ENCODE measurements at regions of chr1 and their contacts with region 1.

Region 1: GRCh38 chr1:35192853-35193664 is at the start of gene SFPQ:
- DNase-seq: peak; percentile 97 to 98 (median 97)
- H3K4me3 ChIP-seq: peak within 1 kb of the TSS; percentile 97 to 100 (median 100)
- H3K4me3 Mint-ChIP-seq: peak within 1 kb of the TSS; percentile 95 to 98
- H3K27ac ChIP-seq: peak within 1 kb of the TSS; percentile 89 to 96
- H3K27ac Mint-ChIP-seq: peak within 1 kb of the TSS; percentile 93 to 100 (median 98)
- H3K4me1 ChIP-seq: peaks cover 34 to 45% of the 10 kb centered on the region in 2 donors
- H3K4me1 Mint-ChIP-seq: peaks cover 46% of the 10 kb centered on the region
- H3K27me3 ChIP-seq: no peaks in the 10 kb centered on the region
- H3K27me3 Mint-ChIP-seq: peaks cover 2 to 4% (median 4%) of the 10 kb centered on the region in 3 donors
- CTCF ChIP-seq: no peak
- polyA plus RNA-seq, gene SFPQ: 80.8 to 220 (median 89.2) TPM

Region 2: GRCh38 chr1:34816778-34817177 is 376.3 kb before region 1 on chr1:
- intact Hi-C with region 1: no loop called
- DNase-seq: no peak
- H3K4me3 ChIP-seq: no peak overlapping the region
- H3K4me3 Mint-ChIP-seq: no peak overlapping the region
- H3K27ac ChIP-seq: no peak overlapping the region
- H3K27ac Mint-ChIP-seq: no peak overlapping the region
- H3K4me1 ChIP-seq: no peaks in the 10 kb centered on the region
- H3K4me1 Mint-ChIP-seq: peaks cover 4% of the 10 kb centered on the region
- H3K27me3 ChIP-seq: no peaks in the 10 kb centered on the region
- H3K27me3 Mint-ChIP-seq: peaks cover 1 to 4% (median 3%) of the 10 kb centered on the region in 3 donors
- CTCF ChIP-seq: no peak

Region 3: DNA sequence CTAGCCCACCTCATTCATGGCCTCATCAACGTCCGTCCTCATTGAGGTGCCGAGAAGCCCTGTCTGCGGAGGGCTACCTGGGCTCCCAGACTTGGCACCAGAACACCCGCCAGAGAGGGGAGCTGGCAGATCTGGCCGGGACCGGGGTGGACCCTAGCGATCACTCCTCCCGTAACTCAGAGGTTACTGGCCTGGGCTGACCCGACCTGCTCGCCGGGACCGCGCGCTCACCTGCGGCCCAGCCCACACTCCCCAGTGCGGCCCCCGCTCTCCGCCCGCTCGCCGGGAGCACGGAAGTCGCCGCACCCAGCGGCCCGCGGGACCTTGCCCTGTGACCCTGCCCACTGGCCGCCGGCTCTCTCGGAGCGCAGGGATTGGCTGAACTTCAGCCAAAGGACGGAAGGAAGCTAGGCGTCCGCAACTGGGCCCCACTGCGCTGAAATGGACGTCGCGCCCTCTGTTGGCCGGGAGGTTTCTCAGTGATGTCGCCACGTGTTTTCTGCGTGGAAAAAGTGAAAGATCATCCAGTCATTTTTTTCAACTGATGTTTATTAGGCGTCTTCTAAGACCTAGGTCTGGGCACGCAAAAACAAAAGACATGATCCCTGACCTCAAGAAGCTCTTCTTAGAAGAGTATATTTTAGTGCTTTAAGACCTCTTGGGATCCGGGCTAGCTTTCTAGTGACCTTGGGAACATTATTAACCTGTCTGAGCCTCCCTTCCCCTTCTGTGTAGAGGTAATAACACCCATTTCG is 333.4 kb before region 1 on chr1 and contains the start of gene SMIM12:
- intact Hi-C with region 1: loop called in 1 of 2 experiments (anchors 10 kb)
- DNase-seq: peak; percentile 91 to 93 (median 92)
- H3K4me3 ChIP-seq: peak within 1 kb of the TSS; percentile 92 to 94 (median 93)
- H3K4me3 Mint-ChIP-seq: peak within 1 kb of the TSS; percentile 92 to 99
- H3K27ac ChIP-seq: peak within 1 kb of the TSS; percentile 74 to 90
- H3K27ac Mint-ChIP-seq: peak within 1 kb of the TSS; percentile 87 to 96 (median 93)
- H3K4me1 ChIP-seq: peaks cover 19 to 24% of the 10 kb centered on the region in 2 donors
- H3K4me1 Mint-ChIP-seq: peaks cover 29% of the 10 kb centered on the region
- H3K27me3 ChIP-seq: no peaks in the 10 kb centered on the region
- H3K27me3 Mint-ChIP-seq: peaks cover 3 to 5% (median 5%) of the 10 kb centered on the region in 3 donors
- CTCF ChIP-seq: peak; percentile 88
- polyA plus RNA-seq, gene SMIM12: 31.8 to 121 (median 93.7) TPM

Region 4: GRCh38 chr1:35030756-35031446 is 162.2 kb before region 1 on chr1:
- intact Hi-C with region 1: loop called in 1 of 2 experiments (anchors 5 kb)
- DNase-seq: peak; percentile 21 to 42 (median 27)
- H3K4me3 ChIP-seq: peak overlapping the region; percentile 90 to 100 (median 96)
- H3K4me3 Mint-ChIP-seq: peak overlapping the region; percentile 95 to 97
- H3K27ac ChIP-seq: peak overlapping the region; percentile 89 to 92
- H3K27ac Mint-ChIP-seq: peak overlapping the region; percentile 94 to 99 (median 99)
- H3K4me1 ChIP-seq: peaks cover 14 to 28% of the 10 kb centered on the region in 2 donors
- H3K4me1 Mint-ChIP-seq: peaks cover 28% of the 10 kb centered on the region
- H3K27me3 ChIP-seq: no peaks in the 10 kb centered on the region
- H3K27me3 Mint-ChIP-seq: peaks cover 0 to 2% (median 2%) of the 10 kb centered on the region in 3 donors
- CTCF ChIP-seq: no peak

Region 5: DNA sequence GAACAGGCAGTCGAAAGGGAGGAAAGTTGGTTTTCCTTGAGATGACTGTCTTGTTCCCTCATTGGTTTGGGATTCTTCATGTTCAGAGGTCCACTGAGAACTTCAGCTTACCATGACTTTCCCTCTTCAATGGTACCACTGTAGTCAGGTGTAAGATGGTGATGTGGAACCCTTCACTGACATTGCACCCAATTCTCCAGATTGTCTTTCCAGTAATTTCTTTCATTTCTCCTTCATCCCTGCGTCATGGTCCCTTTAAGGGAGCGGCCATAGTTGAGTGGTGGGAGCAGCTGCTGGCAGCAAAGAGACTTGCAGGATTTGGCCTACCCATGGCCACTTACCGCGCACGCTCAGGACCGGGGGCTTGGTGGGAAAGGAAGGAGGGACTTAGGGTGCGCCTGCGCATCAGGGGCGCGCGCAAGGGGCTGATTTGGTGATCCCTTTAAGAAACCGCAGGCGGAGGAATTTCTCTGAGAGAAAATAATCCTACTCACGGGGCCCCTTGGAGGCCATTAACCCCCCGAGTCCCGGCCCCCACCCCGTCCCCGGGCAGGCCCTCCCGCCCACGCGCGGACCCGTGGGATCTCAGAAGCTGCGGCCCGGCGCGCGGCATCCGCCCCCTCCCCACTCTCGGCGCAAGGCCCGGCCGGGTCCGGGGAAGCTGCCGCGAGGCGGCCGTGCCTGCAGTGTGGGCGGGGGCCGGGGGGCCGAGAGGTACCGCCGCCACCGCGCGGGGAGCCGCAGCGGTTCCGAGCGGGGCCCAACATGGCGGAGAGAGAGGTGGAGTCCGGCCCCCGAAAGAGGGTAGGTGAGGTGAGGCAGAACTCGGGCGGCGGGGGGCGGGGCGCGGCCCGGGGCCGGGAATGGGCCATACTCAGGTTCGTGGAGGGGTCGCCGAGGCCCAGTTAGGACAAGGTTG is 75.5 kb after region 1 on chr1 and contains the start of gene ZMYM4:
- intact Hi-C with region 1: loop called in 1 of 2 experiments (anchors 10 kb)
- DNase-seq: peak; percentile 92 to 95 (median 95)
- H3K4me3 ChIP-seq: peak within 1 kb of the TSS; percentile 79 to 97 (median 86)
- H3K4me3 Mint-ChIP-seq: peak within 1 kb of the TSS; percentile 85 to 86
- H3K27ac ChIP-seq: peak within 1 kb of the TSS; percentile 40 to 90
- H3K27ac Mint-ChIP-seq: peak within 1 kb of the TSS; percentile 50 to 89 (median 78)
- H3K4me1 ChIP-seq: peaks cover 24 to 34% of the 10 kb centered on the region in 2 donors
- H3K4me1 Mint-ChIP-seq: peaks cover 39% of the 10 kb centered on the region
- H3K27me3 ChIP-seq: no peaks in the 10 kb centered on the region
- H3K27me3 Mint-ChIP-seq: peaks cover 0 to 3% (median 0%) of the 10 kb centered on the region in 3 donors
- CTCF ChIP-seq: no peak
- polyA plus RNA-seq, gene ZMYM4: 12.3 to 31.8 (median 26.0) TPM

Region 6: DNA sequence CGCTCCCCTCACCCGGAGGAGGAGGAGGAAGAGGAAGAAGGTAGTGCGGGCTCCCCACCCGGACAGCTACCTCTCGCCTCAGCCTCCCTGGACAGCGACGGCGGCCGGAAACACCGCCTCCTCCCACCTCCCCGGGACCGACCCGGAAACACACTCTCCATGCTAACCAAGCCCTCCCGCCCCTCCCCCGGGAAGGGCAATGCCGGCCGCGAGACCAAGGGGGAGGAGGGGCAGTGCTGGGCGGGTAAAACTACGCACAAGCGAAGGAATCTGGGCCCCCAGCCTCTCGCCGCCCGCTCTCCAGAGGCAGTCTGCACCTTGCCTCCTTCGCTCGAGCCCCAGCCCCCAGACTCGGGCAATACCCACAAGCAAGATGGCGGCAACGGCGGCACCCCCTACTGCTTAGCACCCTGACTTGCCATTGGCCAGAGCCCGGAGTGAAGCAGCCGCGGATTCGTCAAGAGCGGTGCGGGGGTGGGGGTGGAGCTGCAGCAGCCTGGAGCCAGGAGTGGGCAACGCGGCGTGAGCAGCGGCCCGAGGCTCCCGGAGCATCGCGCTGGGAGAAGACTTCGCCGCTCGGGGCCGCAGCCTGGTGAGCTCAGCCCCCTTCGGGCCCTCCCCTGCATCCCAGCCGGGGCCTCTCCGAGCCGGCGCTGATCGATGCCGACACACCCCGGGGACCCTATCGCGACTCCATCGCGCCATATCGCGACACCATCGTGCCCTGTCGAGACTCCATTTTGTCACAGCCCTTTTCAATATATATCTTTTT is 364.4 kb after region 1 on chr1 and contains the starts of genes KIAA0319L and NCDN:
- intact Hi-C with region 1: loop called (anchors 5 to 10 kb)
- DNase-seq: peak; percentile 90 to 95 (median 93)
- H3K4me3 ChIP-seq: peak within 1 kb of the TSS; percentile 82 to 98 (median 91)
- H3K4me3 Mint-ChIP-seq: peak within 1 kb of the TSS; percentile 93 to 95
- H3K27ac ChIP-seq: peak within 1 kb of the TSS; percentile 76 to 86
- H3K27ac Mint-ChIP-seq: peak within 1 kb of the TSS; percentile 83 to 94 (median 89)
- H3K4me1 ChIP-seq: peaks cover 27 to 39% of the 10 kb centered on the region in 2 donors
- H3K4me1 Mint-ChIP-seq: peaks cover 64% of the 10 kb centered on the region
- H3K27me3 ChIP-seq: no peaks in the 10 kb centered on the region
- H3K27me3 Mint-ChIP-seq: peaks cover 0 to 1% (median 0%) of the 10 kb centered on the region in 3 donors
- CTCF ChIP-seq: no peak
- polyA plus RNA-seq, gene KIAA0319L: 20.6 to 75.3 (median 28.6) TPM
- polyA plus RNA-seq, gene NCDN: 5.0 to 7.9 (median 7.0) TPM

Measured in CD14-positive monocyte (primary cell).